Posterior vena cava (tissue), 2 donors: ENCODE measurements at regions of chr2 and their contacts with region 1.

Region 1: GRCh38 chr2:27086090-27086723 is 365 bp upstream of the KHK start:
- DNase-seq: peak; percentile 99

Region 2: GRCh38 chr2:26964446-26965130 is 121.6 kb before region 1 on chr2:
- intact Hi-C with region 1: loop called (anchors 5 kb)
- DNase-seq: no peak

Region 3: GRCh38 chr2:26970244-26970920 is 115.8 kb before region 1 on chr2 and contains the start of gene MAPRE3:
- intact Hi-C with region 1: loop called in 1 of 2 experiments (anchors 5 kb)
- DNase-seq: peak; percentile 91
- total RNA-seq, gene MAPRE3: 11.4 to 16.3 TPM

Region 4: GRCh38 chr2:27032495-27033252 is 53.5 kb before region 1 on chr2 and contains the start of gene TMEM214:
- intact Hi-C with region 1: loop called (anchors 10 kb)
- DNase-seq: peak; percentile 97
- total RNA-seq, gene TMEM214: 68.0 to 69.8 TPM

Region 5: DNA sequence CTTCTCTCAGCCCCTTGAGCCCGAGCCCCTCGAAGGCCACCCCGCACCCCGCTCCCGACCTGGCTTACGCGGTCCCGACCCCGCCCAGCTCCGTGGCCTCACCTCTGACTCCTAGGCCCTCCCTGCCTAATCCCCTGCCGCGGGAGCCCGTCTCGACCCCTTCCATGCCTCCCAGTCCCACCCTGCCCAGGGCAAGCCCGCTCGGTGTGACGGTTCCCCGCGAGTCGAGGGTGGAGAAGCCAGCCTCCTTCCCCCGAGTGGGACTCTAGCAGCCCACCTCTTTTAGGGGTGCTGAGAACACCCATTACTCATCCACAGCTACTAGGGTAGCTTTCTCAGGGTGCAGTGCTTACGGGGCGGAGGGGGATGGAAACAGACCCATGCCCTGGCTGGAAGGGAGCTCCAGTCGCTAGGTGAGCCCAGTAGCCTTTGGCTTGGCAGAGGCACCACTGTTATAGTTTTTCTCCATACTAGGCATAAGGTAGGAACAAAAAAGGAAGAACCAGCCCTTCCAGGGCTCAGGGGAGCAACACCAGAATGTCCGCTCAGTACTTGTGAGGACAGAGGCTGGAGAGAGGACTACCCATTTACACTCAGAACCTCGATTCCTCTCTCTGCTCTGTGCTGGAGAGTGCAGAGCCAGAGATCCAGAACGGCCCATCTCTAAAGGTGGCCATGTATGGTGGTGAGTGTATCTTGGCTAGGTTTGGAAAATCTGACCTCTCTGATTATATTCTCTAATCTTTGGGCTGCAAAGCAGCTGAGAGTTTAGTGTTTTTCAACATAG is 34.2 kb before region 1 on chr2:
- intact Hi-C with region 1: loop called in 1 of 2 experiments (anchors 2 kb)
- DNase-seq: peak; percentile 87

Region 6: DNA sequence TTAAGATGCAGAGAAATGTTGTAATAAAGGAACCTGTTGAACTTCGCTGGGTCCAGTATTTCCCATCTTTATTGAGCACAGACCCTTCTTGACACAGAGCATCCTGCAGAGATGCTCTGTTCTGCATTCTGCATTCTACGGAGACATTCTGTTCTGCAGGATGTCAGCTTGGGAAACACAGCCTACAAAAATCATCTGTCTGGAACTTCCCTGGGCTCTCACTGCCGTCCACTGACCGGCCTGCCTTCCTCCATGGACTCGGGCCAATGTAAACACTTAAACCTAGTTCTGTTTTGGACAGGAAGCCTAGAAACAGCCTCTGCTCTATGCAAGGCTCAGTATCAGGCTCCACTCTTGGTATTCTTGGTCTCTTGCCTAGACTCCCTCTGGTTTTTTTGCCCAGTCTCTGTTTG is 1575.4 kb after region 1 on chr2:
- intact Hi-C with region 1: no loop called
- DNase-seq: no peak